ENCODE measurements at regions of chr11 and their contacts with region 1.

Region 1: GRCh38 chr11:78416305-78417178 is 1.1 kb downstream of the GAB2 start:
- DNase-seq: peak; percentile 93 to 96
- H3K4me3 ChIP-seq: peak overlapping the region; percentile 70
- H3K4me3 Mint-ChIP-seq: peak overlapping the region; percentile 76
- H3K27ac Mint-ChIP-seq: peak overlapping the region; percentile 79
- H3K4me1 ChIP-seq: peaks cover 23% of the 10 kb centered on the region
- H3K4me1 Mint-ChIP-seq: peaks cover 38% of the 10 kb centered on the region
- H3K27me3 ChIP-seq: no peaks in the 10 kb centered on the region
- H3K27me3 Mint-ChIP-seq: no peaks in the 10 kb centered on the region
- CTCF ChIP-seq: peak; percentile 81 to 88

Region 2: GRCh38 chr11:78139422-78140391 is 276.8 kb before region 1 on chr11 and contains the start of gene ALG8:
- CTCF ChIA-PET with region 1: no interaction called
- POLR2A ChIA-PET with region 1: interaction called, 4 read pairs
- intact Hi-C with region 1: loop called (anchors 2 kb)
- DNase-seq: peak; percentile 99
- H3K4me3 ChIP-seq: peak within 1 kb of the TSS; percentile 49
- H3K4me3 Mint-ChIP-seq: peak within 1 kb of the TSS; percentile 90
- H3K27ac Mint-ChIP-seq: peak within 1 kb of the TSS; percentile 83
- H3K4me1 ChIP-seq: peaks cover 5% of the 10 kb centered on the region
- H3K4me1 Mint-ChIP-seq: peaks cover 21% of the 10 kb centered on the region
- H3K27me3 ChIP-seq: no peaks in the 10 kb centered on the region
- H3K27me3 Mint-ChIP-seq: no peaks in the 10 kb centered on the region
- CTCF ChIP-seq: no peak
- total RNA-seq, gene ALG8: 188 and 191 TPM in 2 replicates

Region 3: GRCh38 chr11:78228467-78228866 is 188.1 kb before region 1 on chr11:
- CTCF ChIA-PET with region 1: interaction called, 42 read pairs
- POLR2A ChIA-PET with region 1: interaction called, 3 read pairs
- intact Hi-C with region 1: loop called (anchors 1 kb)
- DNase-seq: peak; percentile 72 to 81
- H3K4me3 ChIP-seq: no peak overlapping the region
- H3K4me3 Mint-ChIP-seq: no peak overlapping the region
- H3K27ac Mint-ChIP-seq: peak overlapping the region; percentile 24
- H3K4me1 ChIP-seq: no peaks in the 10 kb centered on the region
- H3K4me1 Mint-ChIP-seq: no peaks in the 10 kb centered on the region
- H3K27me3 ChIP-seq: no peaks in the 10 kb centered on the region
- H3K27me3 Mint-ChIP-seq: no peaks in the 10 kb centered on the region
- CTCF ChIP-seq: peak; percentile 79 to 88

Region 4: GRCh38 chr11:78268591-78269410 is 147.7 kb before region 1 on chr11:
- CTCF ChIA-PET with region 1: no interaction called
- POLR2A ChIA-PET with region 1: no interaction called
- intact Hi-C with region 1: no loop called
- DNase-seq: no peak
- H3K4me3 ChIP-seq: no peak overlapping the region
- H3K4me3 Mint-ChIP-seq: no peak overlapping the region
- H3K27ac Mint-ChIP-seq: no peak overlapping the region
- H3K4me1 ChIP-seq: no peaks in the 10 kb centered on the region
- H3K4me1 Mint-ChIP-seq: no peaks in the 10 kb centered on the region
- H3K27me3 ChIP-seq: no peaks in the 10 kb centered on the region
- H3K27me3 Mint-ChIP-seq: no peaks in the 10 kb centered on the region
- CTCF ChIP-seq: no peak

Region 5: DNA sequence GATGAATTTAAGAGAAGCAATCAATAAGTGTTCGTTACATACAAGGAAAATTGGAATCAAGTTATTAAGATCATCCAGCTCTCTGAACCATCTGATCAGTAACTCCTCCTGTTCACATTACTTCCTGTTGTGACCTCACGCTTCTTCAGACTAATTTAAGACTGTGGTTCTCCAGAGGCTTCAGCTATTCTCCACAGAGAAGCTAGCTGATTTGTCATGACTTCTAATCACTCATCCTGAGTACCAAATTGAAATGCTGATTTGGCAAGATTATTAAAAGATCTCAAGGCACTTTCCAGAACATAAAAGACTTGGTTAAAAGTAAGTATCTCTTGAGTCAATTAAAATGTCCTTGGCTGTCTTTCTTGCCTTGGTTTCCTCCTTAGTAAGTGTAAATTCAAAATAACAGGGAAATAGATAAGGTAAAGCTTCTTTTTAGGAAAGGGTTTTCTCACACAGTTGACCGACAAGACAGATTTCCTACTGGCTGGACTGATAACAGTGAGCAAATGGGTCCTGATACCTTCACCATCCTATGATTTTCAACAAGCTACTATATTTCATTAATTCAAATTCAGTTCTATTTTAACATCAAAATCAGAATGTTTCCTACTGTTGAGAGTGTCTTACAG is 37.4 kb before region 1 on chr11:
- CTCF ChIA-PET with region 1: interaction called, 17 read pairs
- POLR2A ChIA-PET with region 1: interaction called, 16 read pairs
- intact Hi-C with region 1: loop called (anchors 1 kb)
- DNase-seq: no peak
- H3K4me3 ChIP-seq: no peak overlapping the region
- H3K4me3 Mint-ChIP-seq: peak overlapping the region; percentile 64
- H3K27ac Mint-ChIP-seq: peak overlapping the region; percentile 93
- H3K4me1 ChIP-seq: peaks cover 75% of the 10 kb centered on the region
- H3K4me1 Mint-ChIP-seq: peaks cover 60% of the 10 kb centered on the region
- H3K27me3 ChIP-seq: no peaks in the 10 kb centered on the region
- H3K27me3 Mint-ChIP-seq: no peaks in the 10 kb centered on the region
- CTCF ChIP-seq: no peak

Region 6: GRCh38 chr11:78438298-78438975 is 21.9 kb after region 1 on chr11:
- CTCF ChIA-PET with region 1: interaction called, 10 read pairs
- POLR2A ChIA-PET with region 1: no interaction called
- intact Hi-C with region 1: no loop called
- DNase-seq: no peak
- H3K4me3 ChIP-seq: no peak overlapping the region
- H3K4me3 Mint-ChIP-seq: no peak overlapping the region
- H3K27ac Mint-ChIP-seq: no peak overlapping the region
- H3K4me1 ChIP-seq: peaks cover 6% of the 10 kb centered on the region
- H3K4me1 Mint-ChIP-seq: peaks cover 7% of the 10 kb centered on the region
- H3K27me3 ChIP-seq: no peaks in the 10 kb centered on the region
- H3K27me3 Mint-ChIP-seq: no peaks in the 10 kb centered on the region
- CTCF ChIP-seq: no peak

Region 7: GRCh38 chr11:78449866-78450265 is 33.3 kb after region 1 on chr11:
- CTCF ChIA-PET with region 1: no interaction called
- POLR2A ChIA-PET with region 1: no interaction called
- intact Hi-C with region 1: no loop called
- DNase-seq: no peak
- H3K4me3 ChIP-seq: no peak overlapping the region
- H3K4me3 Mint-ChIP-seq: no peak overlapping the region
- H3K27ac Mint-ChIP-seq: no peak overlapping the region
- H3K4me1 ChIP-seq: peaks cover 4% of the 10 kb centered on the region; the same call in 1 of the 2 replicates
- H3K4me1 Mint-ChIP-seq: peaks cover 11% of the 10 kb centered on the region
- H3K27me3 ChIP-seq: no peaks in the 10 kb centered on the region
- H3K27me3 Mint-ChIP-seq: no peaks in the 10 kb centered on the region
- CTCF ChIP-seq: no peak

Region 8: GRCh38 chr11:78499971-78500370 is 83.4 kb after region 1 on chr11:
- CTCF ChIA-PET with region 1: no interaction called
- POLR2A ChIA-PET with region 1: no interaction called
- intact Hi-C with region 1: no loop called
- DNase-seq: no peak
- H3K4me3 ChIP-seq: no peak overlapping the region
- H3K4me3 Mint-ChIP-seq: no peak overlapping the region
- H3K27ac Mint-ChIP-seq: no peak overlapping the region
- H3K4me1 ChIP-seq: no peaks in the 10 kb centered on the region
- H3K4me1 Mint-ChIP-seq: no peaks in the 10 kb centered on the region
- H3K27me3 ChIP-seq: no peaks in the 10 kb centered on the region
- H3K27me3 Mint-ChIP-seq: no peaks in the 10 kb centered on the region
- CTCF ChIP-seq: no peak

Measured in Caco-2 (cell line).